CD4-positive, alpha-beta T cell (primary cell): ENCODE measurements at regions of chr10 and their contacts with region 1.

Region 1: DNA sequence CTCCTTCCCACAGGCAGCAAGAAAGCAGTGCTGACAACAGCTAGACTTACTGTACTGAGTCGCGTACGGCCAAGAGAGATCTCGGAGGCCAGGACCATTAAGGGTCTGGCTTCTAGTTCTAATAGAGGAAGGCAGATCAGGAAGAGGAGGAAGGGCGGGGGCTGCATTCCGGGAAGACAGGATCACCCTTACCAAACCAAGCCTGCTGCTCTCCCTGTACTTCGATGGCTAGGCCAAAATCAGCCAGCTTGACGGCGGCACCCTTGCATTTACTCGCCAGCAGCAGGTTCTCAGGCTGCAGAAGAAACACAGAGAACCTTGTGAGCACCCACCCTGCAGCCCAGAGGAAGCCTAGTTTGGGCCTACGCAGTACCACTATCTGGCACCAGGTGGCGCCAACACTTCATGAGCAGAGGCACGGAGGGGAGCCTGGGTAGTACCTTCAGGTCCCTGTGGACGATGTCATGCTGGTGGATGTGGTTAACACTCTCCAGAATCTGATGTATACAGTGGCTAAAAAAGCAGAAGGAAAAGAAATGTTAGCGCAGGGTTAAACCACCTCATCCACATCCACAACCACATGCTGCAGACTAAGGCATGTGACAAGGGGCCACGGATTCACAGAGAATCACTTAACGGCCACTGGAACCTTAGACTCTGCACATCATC is 25.4 kb downstream of the CAMK2G start:
- DNase-seq: peak; percentile 87 to 95 (median 94)
- ATAC-seq: peak; percentile 100
- H3K4me3 ChIP-seq: no peak overlapping the region
- H3K4me3 Mint-ChIP-seq: no peak overlapping the region
- H3K27ac ChIP-seq: peak overlapping the region; percentile 31 to 36
- H3K27ac Mint-ChIP-seq: peak overlapping the region; percentile 89
- H3K4me1 ChIP-seq: peaks cover 13% of the 10 kb centered on the region
- H3K4me1 Mint-ChIP-seq: peaks cover 16% of the 10 kb centered on the region
- H3K27me3 ChIP-seq: no peaks in the 10 kb centered on the region
- H3K27me3 Mint-ChIP-seq: no peaks in the 10 kb centered on the region
- CTCF ChIP-seq: peak; percentile 98

Region 2: DNA sequence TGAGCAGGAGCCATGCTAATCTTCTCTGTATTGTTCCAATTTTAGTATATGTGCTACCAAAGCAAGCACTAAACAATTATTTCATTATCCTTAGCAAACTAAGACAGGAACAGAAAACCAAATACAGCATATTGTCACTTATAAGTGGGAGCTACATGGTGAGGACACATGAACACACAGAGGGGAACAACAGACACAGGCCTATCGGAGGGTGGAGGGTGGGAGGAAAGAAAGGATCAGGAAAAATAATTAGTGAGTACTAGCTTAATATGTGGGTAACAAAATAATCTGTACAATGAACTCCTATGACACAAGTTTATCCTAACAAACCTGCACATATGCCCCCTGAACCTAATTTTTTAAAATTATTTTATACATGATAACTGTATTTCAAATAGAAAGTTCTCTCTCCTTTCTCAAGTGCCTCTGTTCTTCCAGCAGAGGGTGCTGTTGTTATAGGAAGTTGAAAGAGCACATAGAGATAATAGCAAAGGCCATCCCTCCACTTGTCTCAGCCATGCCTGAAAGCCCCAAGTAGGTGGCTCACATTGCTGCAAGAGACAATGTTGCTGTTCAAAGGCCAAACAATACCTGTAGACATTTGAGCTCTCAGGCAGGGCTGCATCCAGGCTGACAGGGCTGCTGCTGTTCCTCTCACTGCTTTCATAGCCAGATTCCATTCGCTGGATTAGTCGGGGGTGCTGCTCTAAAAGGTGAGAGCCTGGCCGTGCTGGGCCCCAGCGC is 319.7 kb before region 1 on chr10:
- CTCF ChIA-PET with region 1: no interaction called
- POLR2A ChIA-PET with region 1: no interaction called
- intact Hi-C with region 1: no loop called
- DNase-seq: peak in 13 of 14 experiments; percentile 2 to 82 (median 32)
- ATAC-seq: peak; percentile 95
- H3K4me3 ChIP-seq: no peak overlapping the region
- H3K4me3 Mint-ChIP-seq: no peak overlapping the region
- H3K27ac ChIP-seq: no peak overlapping the region
- H3K27ac Mint-ChIP-seq: no peak overlapping the region
- H3K4me1 ChIP-seq: no peaks in the 10 kb centered on the region
- H3K4me1 Mint-ChIP-seq: no peaks in the 10 kb centered on the region
- H3K27me3 ChIP-seq: no peaks in the 10 kb centered on the region
- H3K27me3 Mint-ChIP-seq: no peaks in the 10 kb centered on the region
- CTCF ChIP-seq: peak; percentile 88

Region 3: GRCh38 chr10:73874267-73875138 is 25.5 kb after region 1 on chr10 and contains the start of gene CAMK2G:
- CTCF ChIA-PET with region 1: interaction called, 103 read pairs
- POLR2A ChIA-PET with region 1: interaction called, 21 read pairs
- intact Hi-C with region 1: loop called (anchors 1 kb)
- DNase-seq: peak; percentile 66 to 94 (median 81)
- ATAC-seq: peak; percentile 76
- H3K4me3 ChIP-seq: peak within 1 kb of the TSS; percentile 95
- H3K4me3 Mint-ChIP-seq: peak within 1 kb of the TSS; percentile 91
- H3K27ac ChIP-seq: peak within 1 kb of the TSS; percentile 79 to 84
- H3K27ac Mint-ChIP-seq: peak within 1 kb of the TSS; percentile 94
- H3K4me1 ChIP-seq: peaks cover 67% of the 10 kb centered on the region
- H3K4me1 Mint-ChIP-seq: peaks cover 56% of the 10 kb centered on the region
- H3K27me3 ChIP-seq: no peaks in the 10 kb centered on the region
- H3K27me3 Mint-ChIP-seq: no peaks in the 10 kb centered on the region
- CTCF ChIP-seq: no peak
- total RNA-seq, gene CAMK2G: 34.4 to 38.4 TPM

Region 4: DNA sequence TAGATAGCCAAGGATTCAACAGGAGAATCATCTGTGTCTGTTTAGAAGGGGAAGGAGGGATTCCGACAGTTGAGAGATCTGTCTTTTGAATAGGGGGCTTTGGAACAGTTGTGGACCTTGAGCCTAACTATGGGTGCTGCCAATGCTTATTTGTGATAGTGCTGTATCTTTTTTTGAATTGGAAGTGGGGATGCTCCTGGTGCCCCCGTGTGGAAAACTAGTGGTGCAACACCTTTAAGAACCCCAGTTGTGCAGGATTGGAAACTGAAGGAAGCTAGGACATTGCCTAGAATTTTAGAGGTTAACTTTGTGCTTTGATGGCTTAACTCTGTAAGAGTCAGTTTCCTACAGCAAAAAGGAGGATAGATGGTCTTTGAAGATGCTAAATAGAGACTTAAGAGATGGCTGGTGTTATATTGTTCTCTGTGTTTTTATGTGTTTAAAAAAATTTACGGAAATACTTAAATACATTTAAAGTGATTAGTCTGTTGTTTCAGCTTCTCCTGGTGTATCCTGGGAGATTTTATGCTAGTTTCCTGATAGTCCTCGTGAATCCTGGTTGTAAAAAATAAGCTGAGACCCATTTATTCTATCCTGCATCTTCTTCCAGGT is 232.3 kb after region 1 on chr10:
- CTCF ChIA-PET with region 1: no interaction called
- POLR2A ChIA-PET with region 1: no interaction called
- intact Hi-C with region 1: loop called in 1 of 2 experiments (anchors 5 kb)
- DNase-seq: peak in 13 of 14 experiments; percentile 6 to 71 (median 20)
- ATAC-seq: peak; percentile 84
- H3K4me3 ChIP-seq: no peak overlapping the region
- H3K4me3 Mint-ChIP-seq: no peak overlapping the region
- H3K27ac ChIP-seq: no peak overlapping the region
- H3K27ac Mint-ChIP-seq: no peak overlapping the region
- H3K4me1 ChIP-seq: no peaks in the 10 kb centered on the region
- H3K4me1 Mint-ChIP-seq: peaks cover 15% of the 10 kb centered on the region
- H3K27me3 ChIP-seq: no peaks in the 10 kb centered on the region
- H3K27me3 Mint-ChIP-seq: no peaks in the 10 kb centered on the region
- CTCF ChIP-seq: peak; percentile 82